ENCODE measurements at regions of chr1 and their contacts with region 1.

Region 1: GRCh38 chr1:6438047-6438525 is 13.5 kb downstream of the ESPN start:
- DNase-seq: peak; percentile 94
- ATAC-seq: peak; percentile 78
- H3K4me3 Mint-ChIP-seq: peak overlapping the region; percentile 44; the same call in 1 of the 2 replicates
- H3K27ac Mint-ChIP-seq: no peak overlapping the region
- H3K4me1 Mint-ChIP-seq: peaks cover 28% of the 10 kb centered on the region
- H3K27me3 Mint-ChIP-seq: peaks cover 33% of the 10 kb centered on the region
- CTCF ChIP-seq: peak; percentile 99

Region 2: GRCh38 chr1:6245086-6245868 is 192.8 kb before region 1 on chr1:
- CTCF ChIA-PET with region 1: interaction called, 118 read pairs
- POLR2A ChIA-PET with region 1: interaction called, 3 read pairs
- DNase-seq: peak; percentile 89
- ATAC-seq: peak; percentile 7
- H3K4me3 Mint-ChIP-seq: peak overlapping the region; percentile 81
- H3K27ac Mint-ChIP-seq: no peak overlapping the region
- H3K4me1 Mint-ChIP-seq: peaks cover 33% of the 10 kb centered on the region
- H3K27me3 Mint-ChIP-seq: peaks cover 38% of the 10 kb centered on the region
- CTCF ChIP-seq: peak; percentile 39; the same call in 1 of the 2 replicates

Region 3: GRCh38 chr1:6359216-6360116 is 78.6 kb before region 1 on chr1:
- CTCF ChIA-PET with region 1: interaction called, 29 read pairs
- POLR2A ChIA-PET with region 1: no interaction called
- DNase-seq: peak; percentile 42
- ATAC-seq: peak; percentile 11
- H3K4me3 Mint-ChIP-seq: no peak overlapping the region
- H3K27ac Mint-ChIP-seq: peak overlapping the region; percentile 76
- H3K4me1 Mint-ChIP-seq: peaks cover 44% of the 10 kb centered on the region
- H3K27me3 Mint-ChIP-seq: no peaks in the 10 kb centered on the region
- CTCF ChIP-seq: no peak

Region 4: GRCh38 chr1:6409053-6409452 is 29.0 kb before region 1 on chr1:
- CTCF ChIA-PET with region 1: interaction called, 29 read pairs
- POLR2A ChIA-PET with region 1: no interaction called
- DNase-seq: no peak
- ATAC-seq: no peak
- H3K4me3 Mint-ChIP-seq: no peak overlapping the region
- H3K27ac Mint-ChIP-seq: no peak overlapping the region
- H3K4me1 Mint-ChIP-seq: no peaks in the 10 kb centered on the region
- H3K27me3 Mint-ChIP-seq: peaks cover 45% of the 10 kb centered on the region
- CTCF ChIP-seq: no peak

Region 5: GRCh38 chr1:6454856-6455751 is 17.0 kb after region 1 on chr1:
- CTCF ChIA-PET with region 1: interaction called, 85 read pairs
- POLR2A ChIA-PET with region 1: interaction called, 3 read pairs
- DNase-seq: peak; percentile 52
- ATAC-seq: peak; percentile 46
- H3K4me3 Mint-ChIP-seq: no peak overlapping the region
- H3K27ac Mint-ChIP-seq: no peak overlapping the region
- H3K4me1 Mint-ChIP-seq: peaks cover 19% of the 10 kb centered on the region
- H3K27me3 Mint-ChIP-seq: no peaks in the 10 kb centered on the region
- CTCF ChIP-seq: no peak

Region 6: GRCh38 chr1:6481820-6482219 is 43.7 kb after region 1 on chr1:
- CTCF ChIA-PET with region 1: interaction called, 23 read pairs
- POLR2A ChIA-PET with region 1: no interaction called
- DNase-seq: no peak
- ATAC-seq: no peak
- H3K4me3 Mint-ChIP-seq: no peak overlapping the region
- H3K27ac Mint-ChIP-seq: peak overlapping the region; percentile 16; the same call in 1 of the 2 replicates
- H3K4me1 Mint-ChIP-seq: peaks cover 22% of the 10 kb centered on the region
- H3K27me3 Mint-ChIP-seq: peaks cover 7% of the 10 kb centered on the region; the same call in 1 of the 2 replicates
- CTCF ChIP-seq: no peak

Region 7: GRCh38 chr1:6554907-6555778 is 117.1 kb after region 1 on chr1 and contains the start of gene TAS1R1:
- CTCF ChIA-PET with region 1: no interaction called
- POLR2A ChIA-PET with region 1: no interaction called
- DNase-seq: no peak
- ATAC-seq: no peak
- H3K4me3 Mint-ChIP-seq: peak within 1 kb of the TSS; percentile 58
- H3K27ac Mint-ChIP-seq: no peak within 1 kb of the TSS
- H3K4me1 Mint-ChIP-seq: peaks cover 12% of the 10 kb centered on the region
- H3K27me3 Mint-ChIP-seq: no peaks in the 10 kb centered on the region; the same call in 1 of the 2 replicates
- CTCF ChIP-seq: no peak
- total RNA-seq, gene TAS1R1: 0.11 to 0.16 TPM in 2 of 3 replicates, not detected in the other

Measured in WTC11 (cell line).